ENCODE measurements at regions of chr1 and their contacts with region 1.

Region 1: DNA sequence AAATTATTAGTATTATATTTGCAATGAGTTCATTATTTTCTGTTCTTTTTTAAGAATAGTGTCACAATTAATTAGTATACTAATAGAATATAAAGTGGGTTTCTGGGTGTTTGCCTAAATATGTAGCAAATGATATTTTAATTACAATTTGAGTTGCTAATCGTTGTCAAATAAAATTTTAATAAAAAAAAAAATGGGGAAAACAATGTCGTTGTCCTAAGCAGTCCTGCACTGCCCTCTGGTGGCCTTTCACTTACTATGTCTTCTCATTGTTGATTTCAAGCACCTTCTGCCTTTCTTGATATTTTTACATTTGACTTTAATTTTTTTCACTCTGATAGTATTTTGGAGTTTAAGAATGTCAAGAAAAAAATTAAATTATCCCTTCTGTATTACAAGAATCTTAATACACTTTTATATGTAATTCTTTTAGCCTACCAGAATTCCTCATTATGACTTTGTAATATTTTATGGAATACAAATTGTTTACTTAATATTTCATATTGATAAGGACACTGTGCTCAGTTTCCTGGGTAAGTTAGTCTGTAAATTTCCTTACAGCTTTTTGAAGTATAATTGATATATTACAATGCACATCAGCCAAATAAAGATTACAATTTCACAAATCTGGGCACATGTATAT is 104.5 kb upstream of the FMN2 start:
- DNase-seq: peak; percentile 65
- H3K4me3 Mint-ChIP-seq: no peak overlapping the region
- H3K27ac Mint-ChIP-seq: no peak overlapping the region
- H3K4me1 Mint-ChIP-seq: no peaks in the 10 kb centered on the region
- H3K27me3 Mint-ChIP-seq: peaks cover 33% of the 10 kb centered on the region
- CTCF ChIP-seq: peak; percentile 70

Region 2: GRCh38 chr1:238701024-238701423 is 1286.2 kb before region 1 on chr1:
- CTCF ChIA-PET with region 1: no interaction called
- intact Hi-C with region 1: loop called (anchors 5 kb)
- DNase-seq: no peak
- H3K4me3 Mint-ChIP-seq: no peak overlapping the region
- H3K27ac Mint-ChIP-seq: no peak overlapping the region
- H3K4me1 Mint-ChIP-seq: no peaks in the 10 kb centered on the region
- H3K27me3 Mint-ChIP-seq: no peaks in the 10 kb centered on the region
- CTCF ChIP-seq: no peak

Region 3: GRCh38 chr1:239413916-239414315 is 573.3 kb before region 1 on chr1:
- CTCF ChIA-PET with region 1: no interaction called
- intact Hi-C with region 1: loop called (anchors 5 kb)
- DNase-seq: no peak
- H3K4me3 Mint-ChIP-seq: no peak overlapping the region
- H3K27ac Mint-ChIP-seq: no peak overlapping the region
- H3K4me1 Mint-ChIP-seq: no peaks in the 10 kb centered on the region
- H3K27me3 Mint-ChIP-seq: no peaks in the 10 kb centered on the region
- CTCF ChIP-seq: no peak

Region 4: GRCh38 chr1:239696317-239696716 is 290.9 kb before region 1 on chr1:
- CTCF ChIA-PET with region 1: no interaction called
- intact Hi-C with region 1: no loop called
- DNase-seq: no peak
- H3K4me3 Mint-ChIP-seq: no peak overlapping the region
- H3K27ac Mint-ChIP-seq: no peak overlapping the region
- H3K4me1 Mint-ChIP-seq: no peaks in the 10 kb centered on the region
- H3K27me3 Mint-ChIP-seq: no peaks in the 10 kb centered on the region
- CTCF ChIP-seq: no peak

Region 5: DNA sequence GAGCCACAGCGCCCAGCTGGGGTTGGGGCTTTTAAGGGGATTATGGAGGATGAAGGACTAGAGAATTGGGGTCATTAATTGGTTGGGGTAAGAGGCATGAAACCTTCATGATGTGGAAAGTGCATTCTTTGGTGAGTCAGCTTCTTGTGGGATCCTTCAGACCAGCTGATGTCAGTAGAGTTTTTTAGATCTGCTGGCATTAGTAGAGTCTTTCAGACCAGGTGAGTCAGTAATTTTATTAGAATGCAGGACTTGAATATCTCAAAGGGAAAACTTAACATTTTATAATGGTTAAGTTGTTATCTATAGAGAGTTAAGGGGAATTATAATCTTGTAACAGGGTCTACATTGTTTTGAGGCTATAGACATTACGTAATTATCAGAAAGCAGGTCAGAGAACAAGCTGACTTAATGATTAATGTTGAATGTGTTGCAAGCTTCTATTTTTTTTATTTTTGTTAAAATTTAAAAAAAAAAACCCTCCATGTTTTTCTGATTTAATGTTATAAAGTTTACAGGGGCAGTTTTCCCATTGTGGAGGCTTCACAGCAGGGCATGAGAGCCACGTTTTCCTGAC is 56.5 kb before region 1 on chr1:
- CTCF ChIA-PET with region 1: no interaction called
- intact Hi-C with region 1: no loop called
- DNase-seq: no peak
- H3K4me3 Mint-ChIP-seq: no peak overlapping the region
- H3K27ac Mint-ChIP-seq: peak overlapping the region; percentile 33
- H3K4me1 Mint-ChIP-seq: peaks cover 23% of the 10 kb centered on the region
- H3K27me3 Mint-ChIP-seq: no peaks in the 10 kb centered on the region
- CTCF ChIP-seq: no peak

Measured in Calu3 (cell line).